H1 (cell line): ENCODE measurements at regions of chr15 and their contacts with region 1.

Region 1: DNA sequence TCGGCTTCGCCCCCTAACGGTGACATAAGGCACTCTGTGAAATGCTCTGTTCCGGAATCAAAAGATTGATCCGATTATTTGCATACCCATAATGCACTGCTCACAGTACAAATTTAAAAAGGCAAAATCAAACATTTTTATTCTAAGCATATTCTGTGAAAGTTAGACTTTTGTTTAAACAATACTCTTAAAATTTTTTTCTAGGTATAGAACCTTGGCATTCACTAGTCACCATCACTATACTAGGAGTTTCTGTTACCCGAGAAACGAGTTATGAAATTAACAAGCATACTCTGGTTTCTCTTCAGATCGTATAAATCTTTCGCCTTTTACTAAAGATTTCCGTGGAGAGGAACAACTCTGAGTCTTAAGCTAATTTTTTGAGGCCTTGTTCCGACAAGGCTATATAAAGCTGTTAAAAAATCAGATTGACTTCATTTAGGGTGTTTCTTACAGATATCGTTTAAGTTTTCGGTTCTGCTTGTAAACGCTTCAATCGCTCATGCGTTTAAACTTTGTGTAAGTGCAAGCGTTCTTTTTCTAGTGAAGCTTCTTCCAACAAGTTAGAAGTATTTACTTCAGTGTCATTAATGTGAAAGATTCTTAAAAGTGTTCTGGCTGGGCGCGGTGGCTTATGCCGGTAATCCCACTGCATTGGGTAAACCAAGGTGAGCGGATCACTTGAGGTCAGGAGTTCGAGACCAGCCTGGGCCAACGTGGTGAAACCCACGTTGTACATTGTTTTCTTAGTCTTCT is at the start of gene RNU5B-1:
- DNase-seq: peak in 1 of 2 experiments; percentile 81
- H3K4me3 ChIP-seq: peak within 1 kb of the TSS; percentile 25 to 59 (median 44); a peak in 6 of 8 replicates
- H3K27ac ChIP-seq: peak within 1 kb of the TSS; percentile 80; the same call in 1 of the 2 replicates
- H3K4me1 ChIP-seq: peaks cover 0 to 4% (median 1%) of the 10 kb centered on the region in 4 experiments; a peak in 1 of 7 replicates
- H3K27me3 ChIP-seq: no peaks in the 10 kb centered on the region
- CTCF ChIP-seq: peak; percentile 61 to 80 (median 73)
- EP300 ChIP-seq: no peak
- POLR2A ChIP-seq: peak; percentile 100
- RAD21 ChIP-seq: peak in 1 of 2 experiments; percentile 43; a peak in 2 of 4 replicates
- total RNA-seq, gene RNU5B-1: not detected in 2 replicates

Region 2: GRCh38 chr15:65008983-65009382 is 295.6 kb before region 1 on chr15:
- CTCF ChIA-PET with region 1: no interaction called
- POLR2A ChIA-PET with region 1: no interaction called
- DNase-seq: no peak
- H3K4me3 ChIP-seq: no peak overlapping the region
- H3K27ac ChIP-seq: no peak overlapping the region
- H3K4me1 ChIP-seq: 0 out of 7 replicates have a peak, but pooled peaks cover 0 to 3% (median 0%) of the 10 kb centered on the region in 4 experiments
- H3K27me3 ChIP-seq: no peaks in the 10 kb centered on the region
- CTCF ChIP-seq: peak in 2 of 3 experiments; percentile 29 to 39; a peak in 2 of 4 replicates
- EP300 ChIP-seq: no peak
- POLR2A ChIP-seq: no peak
- RAD21 ChIP-seq: peak; percentile 41 to 55

Region 3: GRCh38 chr15:65184868-65185738 is 119.5 kb before region 1 on chr15 and contains the start of gene CLPX:
- CTCF ChIA-PET with region 1: interaction called, 33 read pairs
- POLR2A ChIA-PET with region 1: interaction called, 94 read pairs
- DNase-seq: peak; percentile 87 to 88
- H3K4me3 ChIP-seq: peak within 1 kb of the TSS; percentile 60 to 95 (median 92)
- H3K27ac ChIP-seq: peak within 1 kb of the TSS; percentile 80; the same call in 1 of the 2 replicates
- H3K4me1 ChIP-seq: peaks cover 0 to 2% (median 0%) of the 10 kb centered on the region in 4 experiments; a peak in 2 of 7 replicates
- H3K27me3 ChIP-seq: no peaks in the 10 kb centered on the region
- CTCF ChIP-seq: no peak
- EP300 ChIP-seq: no peak
- POLR2A ChIP-seq: peak; percentile 51 to 86
- RAD21 ChIP-seq: no peak
- total RNA-seq, gene CLPX: 53.6 and 56.4 TPM in 2 replicates

Region 4: DNA sequence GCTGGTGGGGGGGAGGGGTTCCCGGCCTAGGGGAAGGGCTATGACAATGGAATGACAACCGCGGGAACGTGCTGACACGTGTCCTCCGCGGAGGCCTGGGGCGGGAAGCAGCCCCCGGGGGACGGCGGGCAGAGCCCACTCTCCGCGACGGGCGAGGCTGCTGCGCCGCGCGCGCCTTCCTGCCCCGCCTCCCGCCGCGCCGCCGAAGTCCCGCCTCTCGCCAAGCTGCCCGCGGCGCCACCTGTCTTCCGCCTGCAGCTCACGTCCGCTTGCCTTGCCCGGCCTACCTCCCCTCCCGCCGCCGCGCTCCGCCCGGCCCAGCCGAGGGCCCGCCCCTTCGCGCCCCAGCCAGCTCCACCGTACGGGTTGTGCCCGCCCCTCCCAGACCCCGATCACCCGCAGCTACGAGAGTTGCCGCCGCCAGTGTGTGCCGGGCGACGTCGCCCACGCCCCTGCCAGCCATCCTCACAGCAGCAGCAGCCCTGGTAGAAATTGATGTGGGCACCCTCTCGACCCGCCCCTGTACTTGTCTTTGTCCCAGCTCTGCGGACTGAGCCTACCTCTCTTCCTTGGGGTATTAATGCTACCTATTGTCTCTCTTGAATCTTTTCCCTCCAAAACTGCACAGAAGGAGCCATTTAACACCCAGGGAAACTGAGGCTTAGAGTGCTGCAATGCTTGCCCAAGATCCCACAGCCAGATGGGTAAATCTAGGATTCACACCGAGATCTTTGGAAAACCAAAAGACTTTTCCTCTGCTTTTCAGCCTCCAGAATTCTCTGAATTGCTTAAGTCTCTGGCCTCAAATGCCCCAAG is 17.7 kb before region 1 on chr15 and contains the start of gene PARP16:
- CTCF ChIA-PET with region 1: interaction called, 5 read pairs
- POLR2A ChIA-PET with region 1: interaction called, 123 read pairs
- DNase-seq: peak in 1 of 2 experiments; percentile 93
- H3K4me3 ChIP-seq: peak within 1 kb of the TSS; percentile 69 to 77 (median 75)
- H3K27ac ChIP-seq: 0 out of 2 replicates have a peak within 1 kb of the TSS, but pooled peaks have one; percentile 31
- H3K4me1 ChIP-seq: peaks cover 0 to 10% (median 7%) of the 10 kb centered on the region in 4 experiments; a peak in 5 of 7 replicates
- H3K27me3 ChIP-seq: peaks cover 0 to 10% (median 10%) of the 10 kb centered on the region in 4 experiments; a peak in 6 of 7 replicates
- CTCF ChIP-seq: peak; percentile 37 to 66 (median 45)
- EP300 ChIP-seq: peak in 1 of 2 experiments; percentile 34; a peak in 1 of 3 replicates
- POLR2A ChIP-seq: peak in 1 of 2 experiments; percentile 69; a peak in 1 of 3 replicates
- RAD21 ChIP-seq: no peak; a peak in 1 of 4 replicates
- total RNA-seq, gene PARP16: 3.7 and 5.0 TPM in 2 replicates

Region 5: DNA sequence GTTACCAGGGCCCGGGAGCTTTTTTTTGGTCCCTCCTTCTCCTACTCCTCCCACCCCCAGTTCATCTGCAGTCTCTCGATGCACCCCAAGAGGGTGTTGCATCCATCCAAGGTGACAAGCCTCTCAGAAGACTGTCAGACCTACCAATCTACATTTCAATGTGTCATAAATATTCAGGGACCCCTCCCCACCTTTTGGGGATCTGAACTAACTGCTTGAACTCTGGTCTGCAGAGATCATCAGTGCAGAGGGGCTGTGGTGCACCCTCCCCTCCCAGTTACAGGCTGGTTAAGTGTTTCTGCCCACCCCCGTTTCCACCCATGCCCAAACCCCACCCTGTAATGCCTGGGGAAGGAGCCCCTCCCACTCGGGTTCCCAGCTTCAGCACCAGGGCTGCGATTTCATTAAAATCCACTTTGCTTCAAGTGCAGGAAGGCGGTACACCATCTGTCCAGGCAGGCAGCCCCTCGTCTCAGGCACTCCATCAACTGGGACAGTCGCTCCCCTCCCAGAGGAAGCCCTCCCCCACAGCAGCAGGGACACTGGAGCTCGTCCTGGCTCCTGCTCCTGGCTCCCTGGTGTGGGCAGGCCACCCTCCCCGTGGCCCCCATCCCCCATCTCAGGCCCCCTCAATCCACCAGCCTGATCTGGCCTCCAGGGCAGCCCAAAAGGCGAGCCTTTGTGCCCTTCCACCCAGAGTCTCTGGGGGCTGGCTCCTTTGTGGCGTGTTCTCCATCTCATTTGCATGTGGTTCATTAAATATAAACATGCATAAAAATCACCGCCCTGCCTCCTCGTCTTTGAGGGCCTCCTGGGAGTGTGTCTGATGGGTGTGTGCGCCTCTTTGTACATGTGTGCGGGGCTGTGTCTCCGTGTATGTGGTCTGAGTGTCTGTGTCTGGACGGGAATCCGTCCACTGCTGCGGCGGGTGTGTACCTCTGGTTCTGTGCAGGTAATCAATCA is 32.2 kb after region 1 on chr15:
- CTCF ChIA-PET with region 1: no interaction called
- POLR2A ChIA-PET with region 1: interaction called, 10 read pairs
- DNase-seq: no peak
- H3K4me3 ChIP-seq: no peak overlapping the region
- H3K27ac ChIP-seq: no peak overlapping the region
- H3K4me1 ChIP-seq: peaks cover 20 to 48% (median 37%) of the 10 kb centered on the region in 4 experiments
- H3K27me3 ChIP-seq: no peaks in the 10 kb centered on the region
- CTCF ChIP-seq: peak in 2 of 3 experiments; percentile 28 to 38; a peak in 2 of 4 replicates
- EP300 ChIP-seq: no peak
- POLR2A ChIP-seq: no peak
- RAD21 ChIP-seq: peak; percentile 30 to 50; a peak in 3 of 4 replicates

Region 6: GRCh38 chr15:65377104-65377975 is 72.8 kb after region 1 on chr15:
- CTCF ChIA-PET with region 1: interaction called, 4 read pairs
- POLR2A ChIA-PET with region 1: interaction called, 42 read pairs
- DNase-seq: peak in 1 of 2 experiments; percentile 83
- H3K4me3 ChIP-seq: peak overlapping the region; percentile 58 to 89 (median 80)
- H3K27ac ChIP-seq: no peak overlapping the region
- H3K4me1 ChIP-seq: peaks cover 8 to 25% (median 14%) of the 10 kb centered on the region in 4 experiments
- H3K27me3 ChIP-seq: peaks cover 0 to 20% (median 10%) of the 10 kb centered on the region in 4 experiments; a peak in 5 of 7 replicates
- CTCF ChIP-seq: no peak
- EP300 ChIP-seq: no peak
- POLR2A ChIP-seq: no peak; a peak in 1 of 3 replicates
- RAD21 ChIP-seq: no peak

Region 7: GRCh38 chr15:65421360-65422070 is 116.9 kb after region 1 on chr15:
- CTCF ChIA-PET with region 1: no interaction called
- POLR2A ChIA-PET with region 1: interaction called, 94 read pairs
- DNase-seq: peak in 1 of 2 experiments; percentile 90
- H3K4me3 ChIP-seq: peak overlapping the region; percentile 82 to 91 (median 86)
- H3K27ac ChIP-seq: peak overlapping the region; percentile 71
- H3K4me1 ChIP-seq: peaks cover 16 to 48% (median 31%) of the 10 kb centered on the region in 4 experiments
- H3K27me3 ChIP-seq: peaks cover 0 to 16% (median 9%) of the 10 kb centered on the region in 4 experiments; a peak in 4 of 7 replicates
- CTCF ChIP-seq: no peak
- EP300 ChIP-seq: no peak; a peak in 1 of 3 replicates
- POLR2A ChIP-seq: peak in 1 of 2 experiments; percentile 51; a peak in 2 of 3 replicates
- RAD21 ChIP-seq: peak; percentile 0 to 23; a peak in 2 of 4 replicates

Region 8: GRCh38 chr15:65460741-65461347 is 156.3 kb after region 1 on chr15:
- CTCF ChIA-PET with region 1: no interaction called
- POLR2A ChIA-PET with region 1: no interaction called
- DNase-seq: no peak
- H3K4me3 ChIP-seq: no peak overlapping the region
- H3K27ac ChIP-seq: no peak overlapping the region
- H3K4me1 ChIP-seq: no peaks in the 10 kb centered on the region
- H3K27me3 ChIP-seq: no peaks in the 10 kb centered on the region
- CTCF ChIP-seq: no peak
- EP300 ChIP-seq: no peak
- POLR2A ChIP-seq: no peak
- RAD21 ChIP-seq: no peak